OCI-LY7 (cell line): ENCODE measurements at regions of chr6 and their contacts with region 1.

Region 1: DNA sequence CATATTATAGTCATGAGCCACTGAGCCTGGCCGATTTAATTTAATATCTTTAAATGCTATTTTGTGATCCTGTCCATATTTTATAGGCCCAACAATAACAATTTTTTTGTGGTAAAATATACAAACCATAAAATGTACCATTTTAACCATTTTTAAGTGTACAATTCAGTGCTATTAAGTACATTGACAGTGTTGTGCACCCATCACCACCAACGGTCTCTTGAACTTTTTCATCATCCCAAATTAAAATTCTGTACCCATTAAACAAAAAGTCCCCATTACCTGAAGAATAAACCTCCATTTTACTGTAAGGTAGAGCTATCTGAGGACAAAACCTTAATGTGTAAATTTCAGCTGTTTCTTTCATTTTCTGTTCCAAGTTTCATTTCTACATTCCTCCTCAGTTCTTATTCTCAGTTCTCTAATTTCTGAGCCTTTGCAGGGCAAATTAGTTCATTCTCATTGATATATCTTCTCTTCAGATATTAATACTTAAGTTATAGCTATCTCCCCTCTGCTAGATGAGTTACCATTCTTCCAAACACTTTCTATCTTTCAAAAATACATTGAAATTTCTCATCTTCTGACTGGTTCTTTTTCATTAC is 10.3 kb downstream of the MTO1 start:
- DNase-seq: peak; percentile 73
- H3K4me3 ChIP-seq: peak overlapping the region; percentile 46
- H3K27ac ChIP-seq: peak overlapping the region; percentile 95
- H3K4me1 ChIP-seq: peaks cover 33% of the 10 kb centered on the region
- CTCF ChIP-seq: no peak

Region 2: DNA sequence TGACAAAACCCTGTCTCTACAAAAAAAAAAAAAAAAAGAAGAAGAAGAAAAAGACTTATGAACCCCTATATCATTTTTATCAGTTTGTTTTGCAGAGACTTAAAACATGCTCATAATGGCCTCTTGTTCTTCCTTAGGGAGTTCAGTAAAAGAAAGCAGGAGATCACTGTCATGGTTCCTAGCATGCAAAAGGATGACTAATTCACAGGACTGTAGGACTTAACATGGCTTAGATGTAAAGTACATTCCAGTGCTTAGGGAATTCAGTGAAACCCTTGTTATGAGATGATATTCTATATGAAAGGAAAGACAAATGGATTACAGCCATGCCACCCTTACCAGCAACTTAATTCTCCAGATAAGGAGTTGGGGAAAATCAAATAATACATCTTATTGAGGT is 19.6 kb after region 1 on chr6:
- CTCF ChIA-PET with region 1: no interaction called
- POLR2A ChIA-PET with region 1: interaction called, 11 read pairs
- intact Hi-C with region 1: no loop called
- DNase-seq: no peak
- H3K4me3 ChIP-seq: no peak overlapping the region
- H3K27ac ChIP-seq: no peak overlapping the region
- H3K4me1 ChIP-seq: no peaks in the 10 kb centered on the region
- CTCF ChIP-seq: no peak